ENCODE measurements at regions of chr19 and their contacts with region 1.

Region 1: DNA sequence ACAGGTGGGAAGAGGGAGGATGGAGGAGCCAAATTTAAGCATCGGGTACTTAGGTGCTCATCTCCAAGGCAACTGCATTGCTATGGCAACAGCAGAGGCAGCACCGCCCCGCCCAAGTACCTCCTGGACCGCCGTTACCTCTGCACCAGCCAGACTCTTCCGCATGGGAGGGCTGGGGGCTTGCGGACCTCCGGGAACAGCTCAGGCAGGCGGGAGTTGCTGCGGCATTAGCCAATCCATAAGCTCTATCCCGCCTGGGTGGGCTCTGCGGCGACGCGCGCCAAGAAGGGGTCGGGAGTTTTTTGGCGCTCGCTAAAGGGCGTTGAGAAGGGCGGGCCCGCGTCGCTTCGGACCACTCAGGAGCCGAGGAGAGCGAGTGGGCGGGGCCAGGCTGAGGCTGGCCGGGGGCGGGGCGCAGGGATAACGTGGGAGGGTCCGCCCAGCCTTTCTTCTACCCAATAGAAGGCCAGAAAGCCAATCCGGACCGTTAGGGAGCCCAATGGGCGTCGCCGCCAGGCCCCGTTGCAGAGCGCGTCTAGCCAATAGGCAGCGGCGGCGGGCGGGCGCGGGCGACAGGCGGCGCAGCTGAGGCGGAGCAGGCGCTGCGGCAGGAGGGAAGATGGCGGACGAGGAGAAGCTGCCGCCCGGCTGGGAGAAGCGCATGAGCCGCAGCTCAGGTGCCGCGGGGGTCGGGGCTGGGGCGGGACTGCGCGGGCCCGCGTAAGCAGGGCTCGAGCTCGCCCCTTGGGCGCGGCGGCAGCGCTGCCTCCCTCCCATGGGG is at the start of gene PIN1:
- DNase-seq: peak; percentile 100
- H3K4me3 Mint-ChIP-seq: peak within 1 kb of the TSS; percentile 96
- H3K27ac Mint-ChIP-seq: peak within 1 kb of the TSS; percentile 90
- H3K4me1 Mint-ChIP-seq: peaks cover 14% of the 10 kb centered on the region
- H3K27me3 Mint-ChIP-seq: no peaks in the 10 kb centered on the region
- total RNA-seq, gene PIN1: 87.9 and 93.0 TPM in 2 replicates

Region 2: DNA sequence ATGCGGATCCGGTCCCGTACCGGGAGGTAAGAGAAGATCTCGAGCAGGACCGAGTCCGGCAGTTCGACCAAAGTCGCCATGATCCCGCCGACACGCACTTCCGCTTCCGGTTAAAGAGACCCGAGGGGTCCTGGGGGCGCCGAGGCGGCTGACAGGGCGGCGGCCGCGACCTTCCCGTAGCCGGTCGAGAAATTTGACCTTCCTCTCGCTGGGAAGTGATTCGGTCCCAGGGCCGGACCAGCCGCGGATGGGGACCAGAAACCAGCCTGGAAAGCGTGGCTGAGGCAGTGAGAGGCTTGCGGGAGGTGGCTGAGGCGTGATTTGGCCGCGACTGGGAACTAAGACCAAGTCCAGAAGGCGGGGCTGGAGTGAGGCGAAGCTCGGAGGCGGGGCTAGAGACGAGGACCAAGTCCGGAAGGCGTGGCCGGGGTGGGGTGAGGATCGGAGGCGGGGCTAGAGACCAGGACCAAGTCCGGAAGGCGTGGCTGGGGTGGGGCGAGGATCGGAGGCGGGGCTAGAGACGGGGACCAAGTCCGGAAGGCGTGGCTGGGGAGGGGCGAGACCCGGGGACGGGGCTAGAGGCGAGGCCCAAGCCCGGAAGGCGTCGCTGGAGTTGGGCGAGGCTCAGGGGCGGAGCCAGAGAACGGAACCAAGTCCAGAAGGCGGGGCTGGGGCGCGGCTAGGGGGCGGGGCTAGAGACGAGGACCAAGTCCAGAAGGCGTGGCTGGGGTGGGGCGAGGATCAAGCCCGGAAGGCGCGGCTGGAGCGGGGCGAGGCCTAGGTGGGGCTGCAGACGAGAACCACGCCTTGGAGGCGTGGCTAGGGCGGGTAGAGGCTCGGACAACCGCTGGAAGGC is 16.0 kb before region 1 on chr19 and contains the start of gene FBXL12:
- intact Hi-C with region 1: loop called (anchors 1 kb)
- DNase-seq: peak; percentile 100
- H3K4me3 Mint-ChIP-seq: peak within 1 kb of the TSS; percentile 93
- H3K27ac Mint-ChIP-seq: peak within 1 kb of the TSS; percentile 94
- H3K4me1 Mint-ChIP-seq: peaks cover 22% of the 10 kb centered on the region
- H3K27me3 Mint-ChIP-seq: no peaks in the 10 kb centered on the region
- total RNA-seq, gene FBXL12: 19.4 and 23.3 TPM in 2 replicates

Region 3: GRCh38 chr19:9862938-9863337 is 28.0 kb after region 1 on chr19:
- intact Hi-C with region 1: loop called (anchors 2 kb)
- DNase-seq: peak; percentile 81
- H3K4me3 Mint-ChIP-seq: peak overlapping the region; percentile 84
- H3K27ac Mint-ChIP-seq: peak overlapping the region; percentile 89
- H3K4me1 Mint-ChIP-seq: peaks cover 68% of the 10 kb centered on the region
- H3K27me3 Mint-ChIP-seq: no peaks in the 10 kb centered on the region

Region 4: GRCh38 chr19:9914315-9915207 is 79.6 kb after region 1 on chr19:
- intact Hi-C with region 1: loop called (anchors 5 kb)
- DNase-seq: peak; percentile 94
- H3K4me3 Mint-ChIP-seq: peak overlapping the region; percentile 69
- H3K27ac Mint-ChIP-seq: peak overlapping the region; percentile 27
- H3K4me1 Mint-ChIP-seq: peaks cover 6% of the 10 kb centered on the region
- H3K27me3 Mint-ChIP-seq: peaks cover 23% of the 10 kb centered on the region

Region 5: DNA sequence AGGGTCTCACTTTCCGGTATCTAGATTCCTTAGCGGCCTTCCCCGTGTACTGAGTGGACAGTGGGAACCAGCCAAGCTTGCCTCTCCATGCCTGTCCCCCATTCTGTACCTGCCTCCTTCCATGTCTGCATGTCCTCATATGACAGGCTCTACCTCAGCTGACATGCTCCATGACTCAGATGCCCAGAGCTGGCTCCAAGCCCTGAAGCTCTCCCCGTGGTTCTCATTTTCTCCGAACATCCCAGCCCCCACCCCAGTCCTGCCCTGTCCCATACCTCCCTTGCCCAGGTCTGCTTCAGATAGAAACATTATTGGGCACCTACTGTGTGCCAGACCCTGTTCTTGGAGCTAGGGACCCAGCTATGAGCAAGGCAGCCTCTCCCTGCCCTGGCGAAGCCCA is 234.1 kb after region 1 on chr19:
- intact Hi-C with region 1: no loop called
- DNase-seq: no peak
- H3K4me3 Mint-ChIP-seq: no peak overlapping the region
- H3K27ac Mint-ChIP-seq: no peak overlapping the region
- H3K4me1 Mint-ChIP-seq: peaks cover 5% of the 10 kb centered on the region
- H3K27me3 Mint-ChIP-seq: peaks cover 3% of the 10 kb centered on the region